H1 (cell line): ENCODE measurements at regions of chr12 and their contacts with region 1.

Region 1: GRCh38 chr12:68080577-68080976 is 79.0 kb downstream of the IFNG start:
- DNase-seq: no peak
- H3K4me3 ChIP-seq: peak overlapping the region in 1 of 4 experiments; percentile 15; a peak in 1 of 8 replicates
- H3K27ac ChIP-seq: no peak overlapping the region
- H3K4me1 ChIP-seq: peaks cover 0 to 3% (median under 1%) of the 10 kb centered on the region in 4 experiments; a peak in 4 of 7 replicates
- H3K27me3 ChIP-seq: peaks cover 0 to under 1% (median under 1%) of the 10 kb centered on the region in 4 experiments; a peak in 3 of 7 replicates
- CTCF ChIP-seq: no peak
- EP300 ChIP-seq: no peak
- POLR2A ChIP-seq: no peak
- RAD21 ChIP-seq: peak in 1 of 2 experiments; percentile 12; a peak in 1 of 4 replicates

Region 2: GRCh38 chr12:68020699-68021098 is 59.9 kb before region 1 on chr12:
- CTCF ChIA-PET with region 1: no interaction called
- POLR2A ChIA-PET with region 1: no interaction called
- DNase-seq: no peak
- H3K4me3 ChIP-seq: no peak overlapping the region
- H3K27ac ChIP-seq: no peak overlapping the region
- H3K4me1 ChIP-seq: no peaks in the 10 kb centered on the region
- H3K27me3 ChIP-seq: no peaks in the 10 kb centered on the region
- CTCF ChIP-seq: no peak
- EP300 ChIP-seq: no peak
- POLR2A ChIP-seq: no peak
- RAD21 ChIP-seq: no peak

Region 3: GRCh38 chr12:68067762-68068376 is 12.7 kb before region 1 on chr12:
- CTCF ChIA-PET with region 1: interaction called, 12 read pairs
- POLR2A ChIA-PET with region 1: no interaction called
- DNase-seq: no peak
- H3K4me3 ChIP-seq: no peak overlapping the region
- H3K27ac ChIP-seq: no peak overlapping the region
- H3K4me1 ChIP-seq: no peaks in the 10 kb centered on the region
- H3K27me3 ChIP-seq: no peaks in the 10 kb centered on the region; a peak in 1 of 7 replicates
- CTCF ChIP-seq: peak; percentile 19 to 64 (median 61)
- EP300 ChIP-seq: no peak
- POLR2A ChIP-seq: no peak
- RAD21 ChIP-seq: peak; percentile 61 to 76